GM18951 (cell line): ENCODE measurements at regions of chr17 and their contacts with region 1.

Region 1: GRCh38 chr17:3558603-3559269 is 1.1 kb upstream of the TRPV3 start:
- POLR2A ChIP-seq: peak; percentile 73

Region 2: DNA sequence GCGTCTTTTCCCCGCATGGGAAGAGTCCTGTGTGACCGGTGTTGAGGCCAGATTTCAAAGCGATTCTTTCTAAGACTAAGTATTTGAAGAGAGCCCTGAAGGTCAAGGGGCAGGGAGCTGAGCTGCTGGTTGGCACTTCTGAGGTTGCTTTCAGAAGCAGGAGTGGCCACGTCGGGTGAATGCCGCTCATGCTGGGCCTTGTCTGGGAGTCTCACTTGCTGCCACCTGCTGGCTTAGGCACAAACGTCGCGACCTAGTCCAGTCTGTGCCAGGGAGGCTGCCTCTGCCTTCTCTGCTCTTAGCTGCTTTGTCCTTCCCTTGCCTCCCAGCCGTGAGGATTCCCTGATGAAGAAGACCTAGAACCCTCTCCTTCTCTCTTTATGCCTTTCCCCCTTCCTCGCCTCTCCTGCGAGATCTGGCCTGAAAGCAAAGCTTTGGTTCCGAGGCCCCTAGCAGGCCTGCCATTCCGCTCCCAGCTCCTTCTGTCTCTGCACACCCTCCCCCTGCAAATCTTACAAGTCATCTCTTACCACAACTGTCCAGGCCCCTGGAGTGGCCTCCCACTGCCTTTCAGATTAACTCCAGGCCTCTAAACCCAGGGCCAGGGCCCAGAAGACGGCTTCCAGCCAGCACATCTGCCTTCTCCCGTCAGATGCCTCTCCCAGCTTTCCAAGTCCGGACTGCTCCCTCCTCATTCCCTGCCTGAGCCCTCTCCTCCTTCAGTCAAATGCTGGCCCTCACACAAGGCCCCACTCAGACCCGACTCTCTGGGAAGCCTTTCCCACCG is 89.2 kb after region 1 on chr17:
- in situ Hi-C with region 1: no loop called
- POLR2A ChIP-seq: no peak

Region 3: GRCh38 chr17:3976649-3977171 is 418.0 kb after region 1 on chr17:
- in situ Hi-C with region 1: loop called (anchors 10 kb)
- POLR2A ChIP-seq: no peak